Activated T-helper 2 cell treated with anti-CD3 and anti-CD28 coated beads, Interferon-gamma antibody, Interleukin-2, Interleukin-4, amounts not matched to agents 10 μg/mL and 5 μg/mL and 100 μg/mL, durations not matched to agents 14 hours and 24 hours and 36 hours (primary cell): ENCODE measurements at regions of chr1 and their contacts with region 1.

Region 1: DNA sequence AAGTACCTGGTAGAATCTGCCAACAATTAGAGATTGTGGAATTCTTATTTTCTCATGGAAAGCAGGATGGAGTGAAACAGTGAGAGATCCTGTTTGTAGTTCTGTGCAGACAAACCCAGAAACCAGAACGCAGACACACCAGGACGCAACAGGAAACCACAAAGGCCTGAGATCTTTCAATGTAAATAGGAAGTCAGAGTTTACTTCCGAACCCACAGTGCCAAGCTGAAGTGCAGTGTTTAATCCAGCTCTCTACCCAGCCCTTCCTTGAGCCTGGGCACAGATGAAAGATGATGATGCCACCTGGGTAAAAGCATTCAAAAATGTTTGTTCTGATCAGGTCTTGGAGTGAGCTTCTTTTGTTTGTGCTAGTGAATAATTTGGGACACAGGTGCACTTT is 244.2 kb upstream of the HOOK1 start:
- DNase-seq: peak; percentile 28
- H3K4me3 Mint-ChIP-seq: no peak overlapping the region
- H3K27ac Mint-ChIP-seq: no peak overlapping the region
- H3K4me1 Mint-ChIP-seq: peaks cover 43% of the 10 kb centered on the region
- H3K27me3 Mint-ChIP-seq: peaks cover 2% of the 10 kb centered on the region

Region 2: DNA sequence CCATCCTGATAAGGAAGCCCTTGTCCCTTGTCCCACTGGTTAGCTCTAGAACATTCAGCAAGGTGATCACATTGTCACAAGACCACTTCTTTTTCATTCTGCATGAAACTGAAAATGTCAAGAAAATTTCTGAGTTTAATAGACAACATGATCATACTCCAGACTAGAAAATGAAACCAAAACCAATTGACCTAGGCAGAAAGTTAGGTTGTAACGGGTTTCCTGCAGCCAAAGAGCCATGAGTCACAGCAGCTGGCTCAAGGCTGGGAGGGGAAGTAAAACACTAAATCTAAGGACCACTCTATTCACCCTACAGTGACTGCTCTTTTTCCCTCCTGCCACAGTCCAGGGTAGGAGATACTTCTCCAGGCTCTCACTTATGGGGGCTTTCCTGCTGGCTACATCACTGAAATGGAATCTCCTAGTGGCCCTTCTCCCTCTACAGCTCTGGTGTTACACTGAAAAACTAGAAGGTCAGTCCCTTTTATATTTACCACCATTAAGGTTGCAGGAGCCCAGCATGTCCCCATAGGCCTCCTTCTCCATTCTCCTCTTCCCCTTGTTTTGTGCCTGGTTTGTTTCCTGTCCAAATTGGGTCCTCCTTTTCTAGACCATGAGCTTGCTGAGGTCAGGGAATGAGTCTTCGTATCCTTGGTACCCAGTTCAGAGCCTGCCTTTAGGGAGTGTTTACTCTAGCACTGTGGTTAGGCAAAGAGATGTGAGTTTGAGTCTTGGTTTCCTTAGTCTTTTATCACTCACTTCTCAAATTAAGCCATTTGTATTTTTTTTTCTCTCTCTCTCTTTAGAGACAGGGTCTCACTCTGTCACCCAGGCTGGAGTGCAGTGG is 550.1 kb before region 1 on chr1:
- intact Hi-C with region 1: loop called (anchors 10 kb)
- DNase-seq: peak; percentile 44
- H3K4me3 Mint-ChIP-seq: peak overlapping the region; percentile 64
- H3K27ac Mint-ChIP-seq: peak overlapping the region; percentile 98
- H3K4me1 Mint-ChIP-seq: peaks cover 50% of the 10 kb centered on the region
- H3K27me3 Mint-ChIP-seq: no peaks in the 10 kb centered on the region